Activated CD4-positive, alpha-beta memory T cell treated with anti-CD3 and anti-CD28 coated beads, Interleukin-2, amount 10 ng/mL, durations not matched to agents 7 days and 5 days (primary cell): ENCODE measurements at regions of chr14 and their contacts with region 1.

Region 1: GRCh38 chr14:55446218-55446654 is 5.8 kb upstream of the TBPL2 start:
- DNase-seq: peak; percentile 52
- H3K4me3 Mint-ChIP-seq: no peak overlapping the region
- H3K27ac Mint-ChIP-seq: no peak overlapping the region
- H3K4me1 Mint-ChIP-seq: no peaks in the 10 kb centered on the region
- H3K27me3 Mint-ChIP-seq: no peaks in the 10 kb centered on the region

Region 2: GRCh38 chr14:55819610-55820304 is 373.5 kb after region 1 on chr14:
- CTCF ChIA-PET with region 1: no interaction called
- POLR2A ChIA-PET with region 1: no interaction called
- DNase-seq: no peak
- H3K4me3 Mint-ChIP-seq: no peak overlapping the region
- H3K27ac Mint-ChIP-seq: no peak overlapping the region
- H3K4me1 Mint-ChIP-seq: peaks cover 8% of the 10 kb centered on the region
- H3K27me3 Mint-ChIP-seq: peaks cover 28% of the 10 kb centered on the region

Region 3: GRCh38 chr14:56474419-56475022 is 1028.3 kb after region 1 on chr14:
- CTCF ChIA-PET with region 1: interaction called, 17 read pairs
- POLR2A ChIA-PET with region 1: no interaction called
- DNase-seq: no peak
- H3K4me3 Mint-ChIP-seq: no peak overlapping the region
- H3K27ac Mint-ChIP-seq: no peak overlapping the region
- H3K4me1 Mint-ChIP-seq: no peaks in the 10 kb centered on the region
- H3K27me3 Mint-ChIP-seq: peaks cover 10% of the 10 kb centered on the region